ENCODE measurements at regions of chr2 and their contacts with region 1.

Region 1: DNA sequence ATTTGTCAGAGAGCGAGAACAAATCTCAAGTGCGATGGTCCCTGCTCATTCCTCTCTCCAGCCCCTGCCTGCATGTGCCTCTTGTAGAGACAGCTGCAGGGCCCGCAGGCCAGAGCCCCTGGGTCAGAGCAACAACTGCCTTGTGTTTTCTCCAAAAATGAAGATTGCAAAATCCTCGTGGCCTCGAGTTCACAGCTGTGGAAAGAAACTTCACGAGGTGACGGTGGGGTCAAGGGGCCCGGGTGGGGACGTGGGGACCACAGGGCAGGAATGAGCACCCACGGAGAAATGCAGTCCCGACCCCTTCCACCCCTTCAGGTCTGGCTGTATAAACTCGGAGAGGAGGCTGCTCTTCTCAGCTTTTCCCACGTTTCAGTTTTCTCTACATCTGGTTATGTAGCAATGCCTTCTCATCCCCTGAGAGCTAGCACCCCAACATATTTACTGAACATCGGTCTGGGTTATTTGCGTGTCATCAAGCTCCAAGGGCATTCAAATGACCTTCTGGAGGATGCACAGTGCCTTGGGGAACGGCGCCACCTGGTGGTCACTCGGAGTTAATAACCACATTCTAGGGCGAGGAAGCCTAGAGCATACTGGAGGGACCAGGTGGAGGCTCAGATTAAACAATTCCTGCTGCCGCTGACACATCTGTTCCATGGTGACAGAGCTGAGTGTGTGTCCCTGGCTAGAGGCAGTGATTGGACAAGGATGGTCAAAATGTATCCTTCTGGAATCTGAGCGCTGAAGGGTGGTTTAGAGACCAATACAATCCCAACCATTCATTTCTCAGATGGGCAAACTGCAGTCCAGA is 91.4 kb upstream of the CYRIA start:
- DNase-seq: peak; percentile 80
- ATAC-seq: peak; percentile 92 to 93

Region 2: DNA sequence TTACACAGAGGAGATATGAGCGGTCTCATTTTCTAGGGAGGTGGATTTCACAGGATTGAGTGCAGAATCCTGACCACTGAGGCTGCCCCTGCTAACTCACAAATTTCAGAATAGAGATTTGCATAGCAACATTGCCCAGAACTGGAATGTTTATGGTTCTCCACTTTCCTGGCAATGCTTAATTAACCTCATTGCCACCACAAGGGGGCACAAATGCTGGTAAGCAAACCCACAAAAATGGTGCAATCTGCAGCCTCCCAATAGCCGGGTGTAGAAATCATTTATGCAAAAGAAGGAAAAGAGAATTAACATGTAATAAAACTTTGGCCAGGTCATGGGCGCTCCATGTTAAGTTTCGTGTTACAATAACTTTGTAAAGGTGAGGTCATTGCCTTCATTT is 203.8 kb before region 1 on chr2:
- intact Hi-C with region 1: loop called in 1 of 2 experiments (anchors 5 kb)
- DNase-seq: peak; percentile 28
- ATAC-seq: no peak

Region 3: GRCh38 chr2:16578081-16578768 is 178.8 kb before region 1 on chr2:
- intact Hi-C with region 1: no loop called
- DNase-seq: no peak
- ATAC-seq: no peak

Region 4: DNA sequence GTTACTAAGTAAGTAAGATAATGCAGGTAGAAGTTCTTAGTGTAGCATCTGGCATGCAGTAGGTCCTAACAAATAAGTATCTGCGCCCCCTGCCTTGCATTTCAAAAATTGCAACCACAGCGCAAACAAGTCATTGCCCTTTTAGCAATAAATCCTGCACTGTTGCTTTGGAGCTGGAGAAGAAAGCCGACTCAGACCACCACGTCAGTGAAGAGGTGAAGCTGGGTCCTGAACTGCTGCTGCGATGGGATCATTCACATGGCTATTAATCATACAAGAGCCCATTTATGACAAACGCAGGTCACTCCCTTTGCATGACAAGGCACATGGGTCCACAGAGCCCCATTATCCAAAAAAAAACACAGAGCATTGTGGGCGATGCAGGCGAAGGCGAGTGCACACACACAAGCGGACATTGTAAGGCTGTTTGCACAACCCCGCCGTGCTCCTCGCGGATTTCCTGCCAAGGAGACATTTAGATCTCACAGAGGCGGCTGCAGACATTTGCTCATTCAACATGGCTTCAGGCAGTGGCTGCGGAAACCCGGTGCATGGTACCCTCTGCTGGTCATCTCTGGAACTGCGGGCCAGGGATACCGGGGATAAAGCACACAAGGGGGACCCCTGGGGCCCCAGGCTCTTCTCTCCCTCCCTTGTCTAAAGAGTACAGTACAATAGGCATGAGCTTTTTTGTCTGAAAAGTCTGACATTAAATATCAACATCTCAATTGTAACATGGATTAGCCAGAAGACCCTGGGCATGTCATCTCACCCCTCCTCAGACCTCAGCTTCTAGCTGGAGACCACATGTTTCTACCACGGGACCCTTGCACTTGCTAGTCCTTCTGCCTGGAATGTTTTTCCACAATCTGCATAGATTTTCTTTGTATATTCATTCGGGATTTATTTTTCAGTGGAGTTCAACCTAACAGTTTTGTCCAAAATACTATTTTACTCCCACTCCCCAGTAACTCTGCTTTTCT is 148.1 kb before region 1 on chr2:
- intact Hi-C with region 1: loop called in 1 of 2 experiments (anchors 1 kb)
- DNase-seq: peak; percentile 86
- ATAC-seq: peak; percentile 88 to 90

Region 5: GRCh38 chr2:16617282-16618261 is 139.5 kb before region 1 on chr2:
- intact Hi-C with region 1: loop called (anchors 1 to 5 kb)
- DNase-seq: no peak
- ATAC-seq: peak; percentile 16 to 27

Region 6: GRCh38 chr2:16665748-16666448 is 91.1 kb before region 1 on chr2 and contains the start of gene CYRIA:
- intact Hi-C with region 1: no loop called
- DNase-seq: peak; percentile 65
- ATAC-seq: peak; percentile 73 to 80
- total RNA-seq, gene CYRIA: 4.9 to 7.2 TPM

Measured in left cardiac atrium (tissue), 4 donors.